H1 (cell line): ENCODE measurements at regions of chr7 and their contacts with region 1.

Region 1: DNA sequence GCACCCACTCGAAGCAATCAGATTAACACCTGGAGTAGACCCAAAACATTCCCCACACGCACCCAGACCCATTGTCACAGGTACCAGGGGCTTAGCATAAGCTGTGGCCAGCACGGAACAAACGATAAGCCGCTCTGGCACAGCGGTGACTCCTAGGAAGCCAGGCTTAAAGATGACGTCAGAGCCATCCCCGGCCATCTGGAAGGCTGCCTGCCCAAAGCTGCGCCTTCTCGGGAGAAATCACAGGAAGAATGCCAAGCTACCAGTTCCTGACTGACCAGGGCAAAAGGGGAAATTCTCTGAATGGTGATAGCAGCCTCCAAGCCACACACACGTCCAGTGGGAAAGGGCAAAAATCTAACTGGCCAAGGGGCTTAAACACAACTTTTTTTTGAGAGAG is 13.0 kb upstream of the WIPI2 start:
- DNase-seq: no peak
- H3K4me3 ChIP-seq: no peak overlapping the region
- H3K27ac ChIP-seq: no peak overlapping the region
- H3K4me1 ChIP-seq: peaks cover 0 to 3% (median under 1%) of the 10 kb centered on the region in 4 experiments; a peak in 2 of 7 replicates
- H3K27me3 ChIP-seq: no peaks in the 10 kb centered on the region
- CTCF ChIP-seq: no peak
- EP300 ChIP-seq: no peak
- POLR2A ChIP-seq: no peak
- RAD21 ChIP-seq: no peak

Region 2: GRCh38 chr7:5020097-5020496 is 157.0 kb before region 1 on chr7:
- CTCF ChIA-PET with region 1: no interaction called
- POLR2A ChIA-PET with region 1: no interaction called
- DNase-seq: no peak
- H3K4me3 ChIP-seq: no peak overlapping the region
- H3K27ac ChIP-seq: no peak overlapping the region
- H3K4me1 ChIP-seq: no peaks in the 10 kb centered on the region
- H3K27me3 ChIP-seq: no peaks in the 10 kb centered on the region
- CTCF ChIP-seq: no peak
- EP300 ChIP-seq: no peak
- POLR2A ChIP-seq: no peak
- RAD21 ChIP-seq: no peak

Region 3: DNA sequence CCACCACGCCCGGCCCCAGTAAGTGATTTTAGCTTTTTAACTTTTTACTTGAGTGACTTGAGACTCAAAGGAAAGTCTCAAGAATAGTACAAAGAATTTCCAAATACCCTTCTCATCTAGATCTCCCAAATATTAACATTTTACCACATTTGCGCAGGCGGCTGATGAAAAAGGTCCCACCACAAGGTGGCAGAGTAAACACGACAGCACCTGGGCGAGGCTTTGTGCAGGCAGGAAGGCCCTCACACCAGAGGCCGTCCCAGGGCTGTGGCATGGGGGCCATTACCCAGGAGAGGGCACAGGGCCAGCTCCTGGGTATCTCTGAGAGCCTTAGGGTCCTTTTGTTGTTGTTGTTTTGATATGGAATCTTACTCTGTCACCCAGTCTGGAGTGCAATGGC is 37.1 kb before region 1 on chr7:
- CTCF ChIA-PET with region 1: interaction called, 41 read pairs
- POLR2A ChIA-PET with region 1: no interaction called
- DNase-seq: peak in 1 of 2 experiments; percentile 69
- H3K4me3 ChIP-seq: no peak overlapping the region
- H3K27ac ChIP-seq: no peak overlapping the region
- H3K4me1 ChIP-seq: no peaks in the 10 kb centered on the region
- H3K27me3 ChIP-seq: no peaks in the 10 kb centered on the region
- CTCF ChIP-seq: peak; percentile 66 to 75 (median 67)
- EP300 ChIP-seq: no peak
- POLR2A ChIP-seq: no peak
- RAD21 ChIP-seq: peak; percentile 62 to 69